Lower leg skin (tissue), 4 donors: ENCODE measurements at regions of chr2 and their contacts with region 1.

Region 1: GRCh38 chr2:122988395-122989221 is 1036.5 kb upstream of the CNTNAP5 start:
- DNase-seq: no peak
- H3K4me3 ChIP-seq: no peak overlapping the region
- CTCF ChIP-seq: no peak
- POLR2A ChIP-seq: no peak

Region 2: DNA sequence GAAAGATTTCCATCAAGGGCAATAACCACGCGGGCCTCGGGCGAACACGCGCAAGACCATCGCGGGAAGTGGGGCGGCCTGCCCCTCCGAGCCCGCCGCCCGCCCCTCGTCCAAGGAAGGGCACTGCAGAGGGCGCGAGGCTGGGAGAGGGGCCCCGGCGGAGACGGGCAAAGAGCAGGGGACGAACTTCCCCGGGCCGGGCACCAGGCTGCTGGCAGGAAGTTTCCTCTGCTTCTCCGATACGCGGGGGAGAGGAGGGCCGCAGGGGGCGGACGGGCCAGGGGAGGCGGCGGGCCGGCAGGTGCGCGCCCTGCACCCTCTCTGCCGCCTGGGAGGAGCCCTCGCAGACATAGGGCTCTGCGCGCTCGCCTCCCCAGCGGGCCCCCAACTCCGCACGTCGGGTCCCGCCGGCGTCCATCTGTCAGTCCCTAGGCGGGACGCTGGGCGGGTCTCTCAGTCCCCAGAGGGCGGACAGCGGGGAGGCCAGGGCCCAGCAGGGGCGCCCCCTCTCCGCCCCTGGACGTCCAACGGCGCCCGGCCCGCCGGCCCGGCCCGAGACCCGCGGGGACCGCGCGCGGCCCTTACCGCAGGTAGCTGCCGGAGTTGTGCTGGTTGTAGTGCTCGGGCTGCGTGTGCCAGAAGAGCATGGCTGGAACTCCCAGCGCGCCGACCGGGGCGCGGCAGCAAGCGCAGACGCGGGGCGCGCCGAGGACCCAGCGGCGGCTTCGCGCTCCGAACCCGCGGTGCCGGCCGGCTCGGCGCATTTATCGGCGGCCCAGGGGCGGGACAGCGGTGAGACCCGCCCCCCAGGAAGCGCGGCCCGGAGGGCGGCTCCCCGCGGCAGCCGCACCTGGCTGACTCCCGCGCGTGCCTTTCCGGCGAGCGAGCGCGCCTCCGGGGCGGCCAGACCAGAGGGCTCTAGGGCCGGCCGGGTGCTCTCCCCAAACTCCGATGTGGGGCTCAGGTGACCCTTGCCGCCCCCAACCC is 1703.9 kb before region 1 on chr2 and contains the start of gene TFCP2L1:
- intact Hi-C with region 1: no loop called
- DNase-seq: peak in 1 of 2 donors; percentile 86
- H3K4me3 ChIP-seq: peak within 1 kb of the TSS; percentile 48
- CTCF ChIP-seq: no peak
- POLR2A ChIP-seq: no peak
- total RNA-seq, gene TFCP2L1: 18.3 to 75.8 (median 49.3) TPM

Region 3: DNA sequence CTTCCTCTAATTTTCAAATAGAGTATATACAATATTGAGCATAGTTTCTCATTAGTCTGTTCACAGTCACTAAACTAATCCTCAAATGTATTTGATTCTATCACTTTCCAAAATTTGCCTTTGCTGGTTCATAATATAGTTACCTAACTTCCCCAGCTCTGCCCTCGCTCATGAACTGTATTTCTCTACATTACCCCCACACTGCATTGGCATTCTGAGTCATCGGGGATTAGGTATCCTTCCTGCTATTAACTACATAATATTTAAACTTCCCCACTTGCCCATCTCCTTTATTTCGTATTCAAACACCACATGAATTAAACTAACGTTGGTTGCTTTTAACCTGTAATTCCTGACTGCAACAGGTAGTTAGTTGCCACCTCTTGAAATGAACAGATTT is 1324.5 kb before region 1 on chr2:
- intact Hi-C with region 1: loop called (anchors 5 kb)
- DNase-seq: no peak
- H3K4me3 ChIP-seq: no peak overlapping the region
- CTCF ChIP-seq: no peak
- POLR2A ChIP-seq: no peak

Region 4: DNA sequence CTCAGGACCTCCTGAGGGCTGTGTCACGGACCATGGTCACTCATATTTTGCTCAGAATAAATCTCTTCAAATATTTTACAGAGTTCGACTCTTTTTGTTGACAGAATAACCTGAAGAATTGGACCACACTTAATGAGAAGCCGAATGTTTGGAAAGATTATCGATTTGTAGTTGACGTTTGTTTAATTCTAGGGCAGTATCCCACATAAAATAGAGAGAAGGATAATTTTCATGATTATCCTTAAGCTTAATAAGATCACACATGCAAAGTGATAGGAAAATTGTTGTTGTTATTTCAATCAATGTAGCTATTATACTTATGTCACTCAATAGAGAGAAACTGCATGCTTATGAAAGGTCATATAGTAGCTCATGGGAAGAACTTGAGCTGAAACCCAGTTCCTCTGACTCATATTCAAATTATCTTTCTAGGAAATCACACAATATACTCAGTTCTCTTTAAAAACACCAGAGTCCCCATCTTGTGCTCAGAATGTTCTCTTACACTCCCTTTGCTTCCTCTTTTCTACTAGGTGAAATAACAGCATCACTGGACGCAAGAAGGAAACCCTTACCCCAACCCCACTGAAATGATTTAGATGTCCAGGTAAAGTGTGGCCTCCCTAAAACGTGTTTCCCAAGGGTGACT is 251.1 kb before region 1 on chr2:
- intact Hi-C with region 1: no loop called
- DNase-seq: no peak
- H3K4me3 ChIP-seq: no peak overlapping the region
- CTCF ChIP-seq: no peak
- POLR2A ChIP-seq: no peak